ENCODE measurements at regions of chr21 and their contacts with region 1.

Region 1: DNA sequence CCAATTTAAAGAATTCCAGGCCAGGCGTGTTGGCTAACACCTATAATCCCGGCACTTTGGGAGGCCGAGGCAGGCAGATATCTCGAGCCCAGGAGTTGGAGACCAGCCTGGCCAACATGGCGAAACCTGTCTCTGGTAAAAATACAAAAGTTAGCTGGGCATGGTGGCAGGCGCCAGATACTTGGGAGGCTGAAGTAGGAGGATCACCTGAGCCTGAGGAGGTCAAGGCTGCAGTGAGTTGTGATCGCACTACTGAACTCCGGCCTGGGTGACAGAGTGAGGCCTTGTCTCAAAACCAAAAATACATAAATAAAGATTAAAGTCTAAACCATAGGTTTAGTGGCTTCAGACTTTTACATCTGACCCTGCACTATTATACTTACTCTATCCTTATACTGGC is 32.4 kb downstream of the BTG3 start:
- DNase-seq: no peak
- H3K4me3 ChIP-seq: no peak overlapping the region
- H3K27ac ChIP-seq: no peak overlapping the region
- H3K4me1 ChIP-seq: no peaks in the 10 kb centered on the region
- H3K27me3 ChIP-seq: no peaks in the 10 kb centered on the region
- CTCF ChIP-seq: no peak
- POLR2A ChIP-seq: no peak

Region 2: DNA sequence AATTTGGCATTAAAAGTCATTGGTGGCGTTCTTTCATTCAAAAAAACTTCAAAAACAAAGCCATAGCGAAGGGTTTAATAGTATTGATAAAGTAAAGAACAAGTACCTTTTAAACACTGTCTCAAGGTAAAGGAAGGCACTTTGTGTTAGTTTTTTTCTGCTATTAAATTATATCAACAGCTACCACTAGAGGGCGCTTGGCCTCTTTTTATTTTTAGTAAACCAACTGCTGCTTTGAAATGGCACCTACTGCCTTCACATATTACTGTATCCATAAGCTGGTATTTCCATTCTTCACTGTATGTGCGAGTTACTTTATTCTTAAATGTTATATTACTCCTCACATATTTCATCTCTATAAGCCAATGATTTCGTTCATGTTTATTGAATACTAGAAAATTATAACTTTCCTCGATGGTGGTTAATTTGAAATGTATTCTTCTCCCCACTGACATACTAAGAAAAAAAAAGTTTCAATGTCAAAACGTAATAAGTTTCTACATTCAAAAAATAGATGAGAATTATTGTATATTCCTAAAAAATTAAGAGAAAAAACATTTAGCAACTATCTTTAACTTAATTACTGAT is 193.2 kb before region 1 on chr21:
- intact Hi-C with region 1: loop called (anchors 5 kb)
- DNase-seq: no peak
- H3K4me3 ChIP-seq: no peak overlapping the region
- H3K27ac ChIP-seq: no peak overlapping the region
- H3K4me1 ChIP-seq: no peaks in the 10 kb centered on the region
- H3K27me3 ChIP-seq: no peaks in the 10 kb centered on the region
- CTCF ChIP-seq: peak in 9 of 11 experiments; percentile 37 to 73 (median 67)
- POLR2A ChIP-seq: no peak

Region 3: DNA sequence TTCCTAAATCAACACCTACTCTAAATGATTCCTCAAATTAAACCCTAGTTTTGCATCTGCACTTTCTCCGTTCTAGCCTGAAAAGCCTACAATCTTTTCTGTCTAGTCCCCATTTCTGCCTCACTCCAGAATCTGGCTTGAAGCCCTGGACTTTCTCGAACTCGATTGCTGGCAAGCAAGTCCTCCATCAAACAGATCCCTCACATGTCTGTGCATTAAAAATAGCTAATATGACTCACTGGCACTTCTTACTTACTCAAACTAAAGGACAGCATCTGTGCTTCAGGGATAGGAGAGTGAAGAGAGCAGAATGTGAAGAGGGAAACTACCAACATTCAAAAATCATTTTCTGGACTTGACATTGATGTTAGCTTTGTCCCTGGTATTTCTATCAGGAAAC is 119.3 kb before region 1 on chr21:
- intact Hi-C with region 1: no loop called
- DNase-seq: no peak
- H3K4me3 ChIP-seq: no peak overlapping the region
- H3K27ac ChIP-seq: no peak overlapping the region
- H3K4me1 ChIP-seq: no peaks in the 10 kb centered on the region
- H3K27me3 ChIP-seq: no peaks in the 10 kb centered on the region
- CTCF ChIP-seq: no peak
- POLR2A ChIP-seq: no peak

Region 4: GRCh38 chr21:17758657-17759056 is 178.3 kb after region 1 on chr21:
- intact Hi-C with region 1: no loop called
- DNase-seq: no peak
- H3K4me3 ChIP-seq: no peak overlapping the region
- H3K27ac ChIP-seq: no peak overlapping the region
- H3K4me1 ChIP-seq: no peaks in the 10 kb centered on the region
- H3K27me3 ChIP-seq: no peaks in the 10 kb centered on the region
- CTCF ChIP-seq: no peak
- POLR2A ChIP-seq: no peak

Region 5: DNA sequence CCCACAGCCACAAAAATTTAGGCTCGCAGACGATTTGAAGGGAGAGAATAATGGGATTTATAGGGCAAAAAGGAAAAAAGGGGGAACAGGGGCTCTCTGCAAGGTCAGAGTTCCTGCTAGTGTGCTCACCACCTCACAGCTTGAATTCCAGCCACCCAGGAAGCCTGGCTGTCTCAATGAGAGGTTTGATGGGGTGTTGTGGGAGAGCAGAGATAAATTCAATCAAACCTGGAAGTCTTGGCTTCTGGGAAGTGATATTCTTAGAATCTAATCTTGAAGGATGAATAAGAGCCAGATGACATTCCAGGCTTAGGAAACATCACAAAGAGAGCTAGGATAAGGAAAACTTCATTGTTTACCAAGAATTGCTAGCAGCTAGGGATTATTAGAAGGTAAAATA is 286.3 kb after region 1 on chr21:
- intact Hi-C with region 1: no loop called
- DNase-seq: no peak
- H3K4me3 ChIP-seq: no peak overlapping the region
- H3K27ac ChIP-seq: no peak overlapping the region
- H3K4me1 ChIP-seq: no peaks in the 10 kb centered on the region
- H3K27me3 ChIP-seq: no peaks in the 10 kb centered on the region
- CTCF ChIP-seq: no peak
- POLR2A ChIP-seq: no peak

Region 6: GRCh38 chr21:19076031-19076430 is 1495.7 kb after region 1 on chr21:
- intact Hi-C with region 1: no loop called
- DNase-seq: no peak
- H3K4me3 ChIP-seq: no peak overlapping the region
- H3K27ac ChIP-seq: no peak overlapping the region
- H3K4me1 ChIP-seq: no peaks in the 10 kb centered on the region
- H3K27me3 ChIP-seq: no peaks in the 10 kb centered on the region
- CTCF ChIP-seq: no peak
- POLR2A ChIP-seq: no peak

Measured in spleen (tissue), 13 donors.